B cell (primary cell): ENCODE measurements at regions of chr12 and their contacts with region 1.

Region 1: GRCh38 chr12:6921996-6922946 is 5.5 kb upstream of the ATN1 start:
- DNase-seq: peak; percentile 59
- ATAC-seq: peak; percentile 23
- H3K4me3 ChIP-seq: no peak overlapping the region
- H3K4me3 Mint-ChIP-seq: peak overlapping the region; percentile 60
- H3K27ac ChIP-seq: peak overlapping the region; percentile 54 to 57
- H3K27ac Mint-ChIP-seq: peak overlapping the region; percentile 41
- H3K4me1 ChIP-seq: peaks cover 39 to 50% of the 10 kb centered on the region in 2 donors
- H3K4me1 Mint-ChIP-seq: peaks cover 50% of the 10 kb centered on the region
- H3K27me3 ChIP-seq: no peaks in the 10 kb centered on the region
- H3K27me3 Mint-ChIP-seq: no peaks in the 10 kb centered on the region
- CTCF ChIP-seq: no peak

Region 2: GRCh38 chr12:6937481-6938297 is 15.4 kb after region 1 on chr12:
- CTCF ChIA-PET with region 1: interaction called, 132 read pairs
- POLR2A ChIA-PET with region 1: interaction called, 37 read pairs
- intact Hi-C with region 1: loop called (anchors 1 kb)
- DNase-seq: peak; percentile 98
- ATAC-seq: peak; percentile 91
- H3K4me3 ChIP-seq: peak overlapping the region; percentile 28 to 94 (median 80)
- H3K4me3 Mint-ChIP-seq: peak overlapping the region; percentile 87
- H3K27ac ChIP-seq: peak overlapping the region; percentile 88 to 91
- H3K27ac Mint-ChIP-seq: peak overlapping the region; percentile 97
- H3K4me1 ChIP-seq: peaks cover 17 to 31% of the 10 kb centered on the region in 2 donors
- H3K4me1 Mint-ChIP-seq: peaks cover 37% of the 10 kb centered on the region
- H3K27me3 ChIP-seq: no peaks in the 10 kb centered on the region
- H3K27me3 Mint-ChIP-seq: no peaks in the 10 kb centered on the region
- CTCF ChIP-seq: peak; percentile 92

Region 3: GRCh38 chr12:7042842-7043241 is 120.6 kb after region 1 on chr12:
- CTCF ChIA-PET with region 1: interaction called, 3 read pairs
- POLR2A ChIA-PET with region 1: no interaction called
- intact Hi-C with region 1: loop called (anchors 1 kb)
- DNase-seq: peak; percentile 20
- ATAC-seq: no peak
- H3K4me3 ChIP-seq: no peak overlapping the region
- H3K4me3 Mint-ChIP-seq: no peak overlapping the region
- H3K27ac ChIP-seq: no peak overlapping the region
- H3K27ac Mint-ChIP-seq: no peak overlapping the region
- H3K4me1 ChIP-seq: no peaks in the 10 kb centered on the region
- H3K4me1 Mint-ChIP-seq: peaks cover 6% of the 10 kb centered on the region
- H3K27me3 ChIP-seq: no peaks in the 10 kb centered on the region
- H3K27me3 Mint-ChIP-seq: no peaks in the 10 kb centered on the region
- CTCF ChIP-seq: peak; percentile 26